ENCODE measurements at regions of chr13 and their contacts with region 1.

Region 1: GRCh38 chr13:74087357-74087756 is 46.8 kb downstream of the KLF12 start:
- DNase-seq: no peak
- H3K4me3 ChIP-seq: no peak overlapping the region
- H3K27ac ChIP-seq: no peak overlapping the region
- H3K4me1 ChIP-seq: peaks cover 2% of the 10 kb centered on the region
- H3K27me3 ChIP-seq: no peaks in the 10 kb centered on the region
- CTCF ChIP-seq: no peak

Region 2: DNA sequence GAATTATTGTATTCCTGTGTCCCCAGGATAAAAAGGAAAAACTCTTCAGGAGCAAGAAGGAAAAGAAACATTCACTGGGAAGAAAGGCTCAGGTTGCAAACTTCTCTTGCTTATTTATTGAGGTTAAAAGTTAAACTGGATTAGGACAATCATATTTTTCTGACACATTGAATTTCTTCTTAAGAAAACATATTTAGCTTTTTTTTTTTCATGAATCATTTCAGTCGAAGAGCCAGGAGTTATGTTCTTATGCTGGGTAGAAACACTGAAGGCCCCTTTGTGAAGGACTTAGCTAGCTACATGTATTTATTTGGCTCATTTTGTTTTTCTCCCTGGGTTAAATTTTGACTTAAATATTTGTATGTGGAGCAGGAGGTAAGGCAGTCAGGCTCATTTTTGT is 594.5 kb before region 1 on chr13:
- CTCF ChIA-PET with region 1: no interaction called
- dilution Hi-C with region 1: no loop called
- in situ Hi-C with region 1: no loop called
- intact Hi-C with region 1: loop called (anchors 5 kb)
- DNase-seq: peak; percentile 11
- H3K4me3 ChIP-seq: no peak overlapping the region
- H3K27ac ChIP-seq: no peak overlapping the region
- H3K4me1 ChIP-seq: peaks cover 14% of the 10 kb centered on the region
- H3K27me3 ChIP-seq: no peaks in the 10 kb centered on the region
- CTCF ChIP-seq: no peak

Region 3: DNA sequence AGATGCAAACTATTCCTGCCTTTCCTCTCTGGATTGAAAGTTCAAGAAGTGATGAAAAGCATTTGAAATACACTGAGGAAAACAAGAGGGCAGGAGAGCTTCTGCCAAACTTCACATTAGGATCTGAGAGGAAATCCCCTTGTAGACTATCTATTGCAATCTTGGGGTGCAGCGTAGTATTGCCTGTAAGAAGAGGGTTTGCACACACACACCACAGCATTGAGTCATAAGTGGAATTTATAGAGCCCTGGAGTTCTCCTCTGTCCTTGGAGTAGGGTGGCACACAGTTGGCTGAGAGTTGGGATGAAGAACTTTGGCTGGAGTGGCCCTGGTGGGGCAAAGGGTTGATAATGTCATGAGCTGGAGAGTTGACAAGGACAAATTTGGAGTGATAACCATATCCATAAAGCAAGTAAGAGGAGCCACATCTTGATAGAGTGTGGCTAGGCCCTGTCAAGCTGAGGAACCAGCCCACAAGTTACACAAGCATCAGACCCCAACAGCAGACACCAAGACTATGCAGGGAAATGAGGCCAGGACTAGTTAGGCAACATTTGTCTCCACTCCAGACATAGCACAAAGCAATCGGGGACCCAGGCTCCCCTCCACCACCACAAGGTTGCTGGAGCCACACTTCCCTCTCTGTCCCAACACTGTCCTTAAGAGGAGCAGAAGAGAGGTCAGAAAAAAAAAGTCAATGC is 507.6 kb before region 1 on chr13:
- CTCF ChIA-PET with region 1: no interaction called
- dilution Hi-C with region 1: no loop called
- in situ Hi-C with region 1: no loop called
- intact Hi-C with region 1: no loop called
- DNase-seq: no peak
- H3K4me3 ChIP-seq: no peak overlapping the region
- H3K27ac ChIP-seq: no peak overlapping the region
- H3K4me1 ChIP-seq: peaks cover 5% of the 10 kb centered on the region
- H3K27me3 ChIP-seq: no peaks in the 10 kb centered on the region
- CTCF ChIP-seq: no peak

Region 4: GRCh38 chr13:74306496-74306895 is 219.1 kb after region 1 on chr13:
- CTCF ChIA-PET with region 1: no interaction called
- dilution Hi-C with region 1: no loop called
- in situ Hi-C with region 1: no loop called
- intact Hi-C with region 1: no loop called
- DNase-seq: no peak
- H3K4me3 ChIP-seq: no peak overlapping the region
- H3K27ac ChIP-seq: no peak overlapping the region
- H3K4me1 ChIP-seq: no peaks in the 10 kb centered on the region
- H3K27me3 ChIP-seq: no peaks in the 10 kb centered on the region
- CTCF ChIP-seq: no peak